CD4-positive, alpha-beta T cell (primary cell): ENCODE measurements at regions of chr4 and their contacts with region 1.

Region 1: GRCh38 chr4:40205259-40206198 is 8.7 kb downstream of the RHOH start:
- DNase-seq: peak in 4 of 14 experiments; percentile 41 to 76 (median 70)
- ATAC-seq: peak; percentile 41
- H3K4me3 ChIP-seq: peak overlapping the region; percentile 74
- H3K4me3 Mint-ChIP-seq: peak overlapping the region; percentile 100
- H3K27ac ChIP-seq: peak overlapping the region; percentile 93 to 99
- H3K27ac Mint-ChIP-seq: peak overlapping the region; percentile 99
- H3K4me1 ChIP-seq: peaks cover 42% of the 10 kb centered on the region
- H3K4me1 Mint-ChIP-seq: peaks cover 79% of the 10 kb centered on the region
- H3K27me3 ChIP-seq: no peaks in the 10 kb centered on the region
- H3K27me3 Mint-ChIP-seq: no peaks in the 10 kb centered on the region
- CTCF ChIP-seq: no peak

Region 2: DNA sequence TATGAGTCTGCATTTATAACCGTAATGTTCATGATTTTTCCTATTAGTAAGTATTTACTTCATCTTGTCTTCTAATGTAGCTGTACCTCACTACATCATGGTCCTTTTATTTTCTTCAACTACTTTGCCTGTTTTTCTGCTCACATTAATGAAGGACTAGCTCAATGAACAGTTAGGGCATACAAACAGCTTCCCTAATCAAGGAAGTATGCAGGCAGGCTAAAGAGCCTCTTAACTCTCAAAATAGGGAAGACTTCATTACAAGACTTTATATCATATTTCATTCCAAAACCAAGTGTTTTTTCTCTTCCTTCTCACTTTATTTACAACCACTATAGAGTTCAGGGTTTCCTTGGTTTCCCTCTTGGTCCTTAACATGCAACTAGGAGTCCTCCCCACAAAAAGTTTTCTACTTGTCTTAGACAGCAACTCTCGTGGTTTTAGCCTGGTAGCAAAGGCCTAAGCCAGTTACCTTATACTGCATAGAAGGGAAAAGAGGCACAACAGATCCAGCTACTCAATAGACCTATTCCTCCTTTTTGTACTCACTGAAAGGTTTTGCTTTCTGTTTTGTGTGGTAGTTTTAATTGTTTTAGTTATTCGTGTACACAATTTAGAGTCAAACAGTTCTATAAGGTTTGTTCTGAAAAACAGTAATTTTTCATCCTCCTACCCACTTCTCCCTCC is 607.7 kb before region 1 on chr4:
- CTCF ChIA-PET with region 1: no interaction called
- POLR2A ChIA-PET with region 1: no interaction called
- intact Hi-C with region 1: no loop called
- DNase-seq: no peak
- ATAC-seq: no peak
- H3K4me3 ChIP-seq: no peak overlapping the region
- H3K4me3 Mint-ChIP-seq: no peak overlapping the region
- H3K27ac ChIP-seq: no peak overlapping the region
- H3K27ac Mint-ChIP-seq: no peak overlapping the region
- H3K4me1 ChIP-seq: no peaks in the 10 kb centered on the region
- H3K4me1 Mint-ChIP-seq: no peaks in the 10 kb centered on the region
- H3K27me3 ChIP-seq: no peaks in the 10 kb centered on the region
- H3K27me3 Mint-ChIP-seq: no peaks in the 10 kb centered on the region
- CTCF ChIP-seq: no peak

Region 3: DNA sequence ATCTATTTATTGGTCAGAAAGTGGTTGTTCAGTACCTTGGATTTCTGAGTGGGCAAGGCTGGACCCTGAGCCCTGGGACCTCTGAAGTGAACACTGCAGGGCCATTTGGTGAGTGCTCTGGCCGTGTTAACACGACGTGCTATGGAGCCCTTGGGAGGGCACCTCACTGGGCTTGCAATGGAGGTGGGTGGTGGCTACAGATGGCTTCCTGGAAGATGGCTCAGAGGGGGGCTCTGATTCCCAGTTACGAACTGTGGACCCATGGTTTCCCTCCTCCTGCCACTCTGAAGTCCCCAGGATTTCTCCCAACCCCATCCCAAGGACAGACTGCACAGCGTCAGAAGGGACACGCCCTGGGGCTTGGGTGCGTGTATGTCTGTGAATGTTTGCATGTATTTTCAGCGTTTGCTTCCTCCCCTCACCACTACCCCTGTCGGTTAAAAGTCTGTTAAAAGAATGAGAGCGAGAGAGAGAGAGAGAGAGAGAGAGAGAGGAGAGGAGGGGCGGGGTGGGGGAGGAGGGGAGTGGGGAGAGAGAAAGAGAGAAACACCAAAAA is 12.4 kb before region 1 on chr4:
- CTCF ChIA-PET with region 1: interaction called, 6 read pairs
- POLR2A ChIA-PET with region 1: interaction called, 112 read pairs
- intact Hi-C with region 1: loop called in 1 of 2 experiments (anchors 1 kb)
- DNase-seq: peak in 8 of 14 experiments; percentile 43 to 79 (median 51)
- ATAC-seq: peak; percentile 25
- H3K4me3 ChIP-seq: peak overlapping the region; percentile 74
- H3K4me3 Mint-ChIP-seq: peak overlapping the region; percentile 94
- H3K27ac ChIP-seq: peak overlapping the region; percentile 67 to 99
- H3K27ac Mint-ChIP-seq: peak overlapping the region; percentile 99
- H3K4me1 ChIP-seq: peaks cover 43% of the 10 kb centered on the region
- H3K4me1 Mint-ChIP-seq: peaks cover 72% of the 10 kb centered on the region
- H3K27me3 ChIP-seq: no peaks in the 10 kb centered on the region
- H3K27me3 Mint-ChIP-seq: peaks cover 5% of the 10 kb centered on the region
- CTCF ChIP-seq: no peak

Region 4: DNA sequence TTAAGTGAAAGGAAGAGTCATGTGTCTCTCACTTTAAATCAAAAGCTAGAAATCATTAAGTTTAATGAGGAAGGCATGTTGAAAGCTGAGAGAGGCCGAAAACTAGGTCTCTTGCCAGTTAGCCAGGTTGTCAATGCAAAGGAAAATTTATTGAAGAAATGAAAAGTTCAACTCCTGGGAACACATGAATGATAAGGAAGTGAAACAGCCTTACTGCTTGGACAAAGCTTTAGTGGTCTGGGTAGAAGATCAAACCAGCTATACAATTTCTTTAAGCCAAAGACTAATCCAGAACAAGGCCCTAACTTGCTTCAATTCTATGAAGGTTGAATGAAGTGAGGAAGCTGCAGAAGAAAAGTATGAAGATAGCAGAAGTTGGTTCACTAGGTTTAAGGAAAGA is 16.2 kb after region 1 on chr4:
- CTCF ChIA-PET with region 1: interaction called, 5 read pairs
- POLR2A ChIA-PET with region 1: interaction called, 156 read pairs
- intact Hi-C with region 1: loop called in 1 of 2 experiments (anchors 2 kb)
- DNase-seq: no peak
- ATAC-seq: no peak
- H3K4me3 ChIP-seq: no peak overlapping the region
- H3K4me3 Mint-ChIP-seq: peak overlapping the region; percentile 32
- H3K27ac ChIP-seq: peak overlapping the region; percentile 3 to 37
- H3K27ac Mint-ChIP-seq: peak overlapping the region; percentile 93
- H3K4me1 ChIP-seq: peaks cover 76% of the 10 kb centered on the region
- H3K4me1 Mint-ChIP-seq: peaks cover 94% of the 10 kb centered on the region
- H3K27me3 ChIP-seq: no peaks in the 10 kb centered on the region
- H3K27me3 Mint-ChIP-seq: no peaks in the 10 kb centered on the region
- CTCF ChIP-seq: no peak

Region 5: GRCh38 chr4:40247350-40247749 is 41.8 kb after region 1 on chr4:
- CTCF ChIA-PET with region 1: interaction called, 3 read pairs
- POLR2A ChIA-PET with region 1: interaction called, 27 read pairs
- intact Hi-C with region 1: loop called in 1 of 2 experiments (anchors 5 kb)
- DNase-seq: peak; percentile 51 to 87 (median 66)
- ATAC-seq: peak; percentile 81
- H3K4me3 ChIP-seq: no peak overlapping the region
- H3K4me3 Mint-ChIP-seq: peak overlapping the region; percentile 45
- H3K27ac ChIP-seq: peak overlapping the region; percentile 71 to 72
- H3K27ac Mint-ChIP-seq: peak overlapping the region; percentile 93
- H3K4me1 ChIP-seq: peaks cover 84% of the 10 kb centered on the region
- H3K4me1 Mint-ChIP-seq: peaks cover 88% of the 10 kb centered on the region
- H3K27me3 ChIP-seq: no peaks in the 10 kb centered on the region
- H3K27me3 Mint-ChIP-seq: no peaks in the 10 kb centered on the region
- CTCF ChIP-seq: no peak

Region 6: DNA sequence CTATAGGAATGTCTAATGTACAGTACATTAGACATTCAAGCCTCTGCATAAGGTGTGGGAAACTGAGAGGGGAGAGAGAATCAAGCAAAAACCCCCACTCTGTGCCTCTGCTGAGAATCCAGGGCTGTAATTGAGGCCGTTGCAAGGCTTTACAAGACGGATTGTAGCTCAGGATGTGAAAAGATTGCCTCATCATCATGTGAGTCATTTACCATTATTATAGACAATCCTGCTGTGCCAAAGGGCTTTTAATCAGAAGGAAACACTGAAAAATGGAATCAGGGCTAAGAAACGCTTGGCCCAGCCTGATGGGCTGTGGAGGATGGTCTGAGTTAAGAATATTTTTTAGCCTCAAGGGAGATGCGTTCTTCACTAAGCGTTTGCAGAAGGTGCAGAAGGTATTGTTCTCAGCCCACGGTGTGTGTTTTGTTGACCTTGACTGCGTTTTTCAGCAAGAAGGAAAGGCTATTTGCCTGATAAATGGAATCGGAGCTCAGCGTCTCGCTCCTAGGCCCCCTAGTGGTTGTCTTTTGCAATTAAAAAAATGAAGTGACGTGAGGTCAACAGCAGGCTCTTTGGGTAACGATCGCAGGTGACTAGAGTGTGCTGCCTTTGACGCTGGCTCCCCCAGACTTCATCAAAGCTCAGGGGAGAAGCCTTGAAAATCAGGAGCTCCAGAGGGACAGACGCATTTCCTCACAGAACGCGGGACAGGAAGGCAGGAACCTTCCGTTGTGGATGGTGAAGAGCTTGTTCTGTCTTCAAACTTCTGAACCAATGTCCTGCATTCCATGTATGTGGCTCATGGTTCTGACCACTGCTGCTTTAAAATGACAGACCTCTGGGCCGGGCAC is 111.5 kb after region 1 on chr4:
- CTCF ChIA-PET with region 1: interaction called, 10 read pairs
- POLR2A ChIA-PET with region 1: interaction called, 98 read pairs
- intact Hi-C with region 1: no loop called
- DNase-seq: peak in 13 of 14 experiments; percentile 34 to 88 (median 54)
- ATAC-seq: peak; percentile 67
- H3K4me3 ChIP-seq: peak overlapping the region; percentile 54
- H3K4me3 Mint-ChIP-seq: peak overlapping the region; percentile 83
- H3K27ac ChIP-seq: peak overlapping the region; percentile 69 to 80
- H3K27ac Mint-ChIP-seq: peak overlapping the region; percentile 91
- H3K4me1 ChIP-seq: peaks cover 20% of the 10 kb centered on the region
- H3K4me1 Mint-ChIP-seq: peaks cover 57% of the 10 kb centered on the region
- H3K27me3 ChIP-seq: no peaks in the 10 kb centered on the region
- H3K27me3 Mint-ChIP-seq: no peaks in the 10 kb centered on the region
- CTCF ChIP-seq: peak; percentile 86

Region 7: DNA sequence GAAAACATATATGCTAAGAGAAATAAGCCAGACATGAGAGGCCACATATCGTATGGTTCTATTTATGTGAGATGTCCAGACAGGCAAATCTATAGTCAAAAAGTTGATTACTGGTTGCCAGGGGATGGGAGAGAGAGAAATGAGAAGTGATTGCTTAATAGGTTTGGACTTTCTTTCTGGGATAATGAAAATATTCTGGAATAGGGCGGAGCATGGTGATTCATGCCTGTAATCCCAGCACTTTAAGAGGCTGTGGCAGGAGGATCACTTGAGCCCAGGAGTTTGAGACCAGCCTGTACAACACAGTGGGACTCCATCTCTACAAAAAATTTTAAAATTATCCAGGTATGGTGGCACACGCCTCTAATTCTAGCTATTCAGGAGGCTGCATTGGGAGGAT is 401.7 kb after region 1 on chr4:
- CTCF ChIA-PET with region 1: no interaction called
- POLR2A ChIA-PET with region 1: no interaction called
- intact Hi-C with region 1: no loop called
- DNase-seq: no peak
- ATAC-seq: no peak
- H3K4me3 ChIP-seq: no peak overlapping the region
- H3K4me3 Mint-ChIP-seq: no peak overlapping the region
- H3K27ac ChIP-seq: no peak overlapping the region
- H3K27ac Mint-ChIP-seq: no peak overlapping the region
- H3K4me1 ChIP-seq: no peaks in the 10 kb centered on the region
- H3K4me1 Mint-ChIP-seq: no peaks in the 10 kb centered on the region
- H3K27me3 ChIP-seq: no peaks in the 10 kb centered on the region
- H3K27me3 Mint-ChIP-seq: no peaks in the 10 kb centered on the region
- CTCF ChIP-seq: no peak